ENCODE measurements at regions of chr5 and their contacts with region 1.

Region 1: GRCh38 chr5:170791325-170791954 is 7.9 kb downstream of the GABRP start:
- DNase-seq: no peak

Region 2: DNA sequence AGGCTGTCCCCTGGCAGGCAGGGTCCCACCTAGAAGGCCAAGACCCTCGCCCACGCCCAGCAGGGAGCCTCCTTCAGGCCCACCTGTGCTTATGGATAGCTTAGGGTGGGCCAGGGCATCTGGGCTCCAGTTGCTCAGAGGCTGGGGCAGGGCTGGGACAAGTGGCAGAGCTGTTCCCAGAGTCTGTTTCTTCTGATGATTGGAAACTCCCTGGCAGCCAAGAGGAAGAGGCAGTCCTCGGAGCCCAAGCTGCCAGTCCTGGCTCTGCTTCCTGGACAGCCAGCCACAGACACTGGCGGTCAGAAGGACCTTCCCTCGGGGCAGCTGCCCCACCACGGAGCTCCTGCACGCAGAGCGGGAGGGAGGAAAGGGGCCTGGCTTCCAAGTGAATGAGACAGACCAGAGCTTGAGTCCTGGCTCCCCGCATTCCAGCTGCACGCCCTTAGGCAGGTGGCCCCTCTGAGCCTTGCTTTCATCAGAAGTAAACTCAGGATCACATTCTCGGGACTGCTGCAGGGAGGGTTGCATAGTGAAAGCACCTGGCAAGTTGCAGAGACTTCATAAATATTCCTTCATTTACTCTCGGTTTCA is 45.9 kb before region 1 on chr5:
- intact Hi-C with region 1: loop called (anchors 2 kb)
- DNase-seq: no peak

Region 3: DNA sequence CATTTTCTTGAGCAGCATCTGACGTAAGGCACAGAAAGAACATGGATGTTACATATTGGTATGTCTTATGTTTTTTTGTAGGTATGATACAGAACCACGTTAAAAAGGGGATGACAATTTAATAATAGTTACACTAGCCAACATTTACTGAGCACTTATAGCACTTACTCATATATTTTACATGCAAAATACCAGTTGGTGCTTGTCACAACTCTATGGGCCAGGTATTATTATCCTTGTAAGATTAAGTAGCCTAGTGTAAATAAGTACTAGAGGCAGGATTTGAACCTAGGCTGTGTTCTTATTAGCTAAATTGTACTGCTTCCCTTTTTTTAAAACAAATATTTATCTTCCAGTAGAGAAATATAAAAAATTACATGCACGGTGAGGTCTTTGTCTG is 153.8 kb after region 1 on chr5:
- intact Hi-C with region 1: no loop called
- DNase-seq: no peak

Measured in posterior vena cava (tissue), 2 donors.